Common myeloid progenitor, CD34-positive (primary cell): ENCODE measurements at regions of chrX and their contacts with region 1.

Region 1: GRCh38 chrX:48937054-48937907 is 18.5 kb upstream of the PIM2 start:
- DNase-seq: peak; percentile 82 to 95 (median 95)
- H3K4me3 ChIP-seq: peak overlapping the region in 4 of 7 experiments; percentile 4 to 50 (median 30)
- H3K27ac ChIP-seq: peak overlapping the region; percentile 58 to 80
- H3K4me1 ChIP-seq: peaks cover 22 to 75% (median 71%) of the 10 kb centered on the region in 4 experiments
- H3K27me3 ChIP-seq: peaks cover 0 to 4% (median 0%) of the 10 kb centered on the region in 5 experiments

Region 2: GRCh38 chrX:48911412-48912182 is 25.7 kb before region 1 on chrX and contains the start of gene SLC35A2:
- CTCF ChIA-PET with region 1: interaction called, 10 read pairs
- POLR2A ChIA-PET with region 1: interaction called, 12 read pairs
- DNase-seq: peak; percentile 78 to 91 (median 88)
- H3K4me3 ChIP-seq: peak within 1 kb of the TSS; percentile 58 to 93 (median 76)
- H3K27ac ChIP-seq: peak within 1 kb of the TSS; percentile 83 to 91
- H3K4me1 ChIP-seq: peaks cover 7 to 37% (median 17%) of the 10 kb centered on the region in 4 experiments
- H3K27me3 ChIP-seq: peaks cover 0 to 3% (median 0%) of the 10 kb centered on the region in 5 experiments

Region 3: GRCh38 chrX:48917139-48918001 is 19.9 kb before region 1 on chrX:
- CTCF ChIA-PET with region 1: interaction called, 10 read pairs
- POLR2A ChIA-PET with region 1: interaction called, 13 read pairs
- DNase-seq: peak; percentile 84 to 91 (median 90)
- H3K4me3 ChIP-seq: peak overlapping the region; percentile 50 to 93 (median 84)
- H3K27ac ChIP-seq: peak overlapping the region; percentile 61 to 84
- H3K4me1 ChIP-seq: peaks cover 12 to 59% (median 39%) of the 10 kb centered on the region in 4 experiments
- H3K27me3 ChIP-seq: peaks cover 0 to 3% (median 0%) of the 10 kb centered on the region in 5 experiments

Region 4: DNA sequence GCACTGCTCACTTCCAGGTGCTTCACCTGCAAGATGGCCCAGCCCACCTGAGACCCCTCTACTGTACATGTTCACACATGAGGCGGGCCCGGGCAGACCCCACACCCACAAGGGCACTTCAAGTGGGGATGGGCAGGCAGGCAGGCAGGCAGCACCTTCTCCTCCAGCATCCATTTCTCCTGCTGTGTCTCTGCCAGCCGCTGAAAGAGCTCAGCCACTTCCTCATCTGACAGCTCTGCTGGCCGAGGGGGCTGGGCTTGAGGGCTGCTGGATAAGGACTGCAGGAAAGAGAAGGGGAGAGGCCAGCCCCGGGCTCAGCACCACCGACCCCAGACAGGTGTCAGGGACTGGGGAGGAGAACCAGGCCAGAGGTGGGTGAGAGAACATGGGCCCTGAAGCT is 38.8 kb after region 1 on chrX:
- CTCF ChIA-PET with region 1: no interaction called
- POLR2A ChIA-PET with region 1: no interaction called
- DNase-seq: peak in 2 of 3 donors; percentile 38 to 45
- H3K4me3 ChIP-seq: no peak overlapping the region
- H3K27ac ChIP-seq: no peak overlapping the region
- H3K4me1 ChIP-seq: peaks cover 0 to 23% (median 16%) of the 10 kb centered on the region in 4 experiments
- H3K27me3 ChIP-seq: no peaks in the 10 kb centered on the region

Region 5: GRCh38 chrX:49053223-49054072 is 116.2 kb after region 1 on chrX:
- CTCF ChIA-PET with region 1: no interaction called
- POLR2A ChIA-PET with region 1: no interaction called
- DNase-seq: peak; percentile 61 to 77 (median 71)
- H3K4me3 ChIP-seq: peak overlapping the region; percentile 42 to 72 (median 63)
- H3K27ac ChIP-seq: peak overlapping the region in 1 of 2 experiments; percentile 70
- H3K4me1 ChIP-seq: peaks cover 0 to 20% (median 8%) of the 10 kb centered on the region in 4 experiments
- H3K27me3 ChIP-seq: no peaks in the 10 kb centered on the region